Sciatic nerve (tissue), 2 donors: ENCODE measurements at regions of chr12 and their contacts with region 1.

Region 1: DNA sequence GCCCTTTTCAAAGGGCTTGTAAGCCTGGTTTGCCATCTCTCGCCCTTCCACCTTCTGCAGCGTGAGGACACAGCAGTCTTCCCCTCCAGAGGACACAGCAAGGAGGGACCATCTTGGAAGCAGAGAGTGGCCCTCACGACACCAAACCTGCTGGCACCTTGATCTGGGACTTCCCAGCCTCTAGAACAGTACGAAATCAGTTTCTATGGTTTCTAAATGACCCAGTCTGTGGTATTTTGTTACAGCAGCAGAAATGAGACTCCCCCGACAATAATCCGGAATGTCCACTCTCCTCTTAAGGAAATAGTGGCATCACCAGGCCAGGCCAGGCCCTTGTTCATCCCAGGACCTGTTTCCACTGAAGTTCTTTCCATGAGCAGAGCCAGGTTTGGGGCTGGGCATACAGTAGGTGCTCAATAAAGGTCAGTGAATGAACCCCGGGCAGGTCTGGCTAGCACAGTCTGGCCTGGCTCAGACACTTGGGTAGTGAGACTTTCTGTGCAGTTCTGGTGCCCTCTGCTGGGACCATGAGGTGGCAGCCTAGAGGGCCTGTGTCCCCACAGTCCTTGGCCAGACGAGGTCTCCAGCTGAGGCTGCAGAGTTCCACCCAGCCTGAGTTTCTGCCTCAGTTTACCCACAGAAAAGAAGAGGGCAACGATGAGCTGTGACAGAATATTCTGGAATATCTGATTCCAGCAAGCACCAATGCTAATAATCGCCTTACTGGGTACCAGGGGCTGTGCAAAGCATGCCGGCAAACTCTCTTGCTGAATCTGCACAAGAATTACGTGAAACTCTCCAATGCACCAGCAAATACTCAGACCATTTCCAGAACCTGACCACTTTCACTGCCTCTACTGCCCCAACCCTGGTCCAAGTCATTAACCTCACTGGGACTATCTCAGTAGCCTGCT is 14.0 kb downstream of the ABCB9 start:
- DNase-seq: peak; percentile 87
- ATAC-seq: peak; percentile 95

Region 2: GRCh38 chr12:122856999-122857671 is 95.1 kb before region 1 on chr12:
- intact Hi-C with region 1: loop called (anchors 5 kb)
- DNase-seq: no peak
- ATAC-seq: no peak

Region 3: DNA sequence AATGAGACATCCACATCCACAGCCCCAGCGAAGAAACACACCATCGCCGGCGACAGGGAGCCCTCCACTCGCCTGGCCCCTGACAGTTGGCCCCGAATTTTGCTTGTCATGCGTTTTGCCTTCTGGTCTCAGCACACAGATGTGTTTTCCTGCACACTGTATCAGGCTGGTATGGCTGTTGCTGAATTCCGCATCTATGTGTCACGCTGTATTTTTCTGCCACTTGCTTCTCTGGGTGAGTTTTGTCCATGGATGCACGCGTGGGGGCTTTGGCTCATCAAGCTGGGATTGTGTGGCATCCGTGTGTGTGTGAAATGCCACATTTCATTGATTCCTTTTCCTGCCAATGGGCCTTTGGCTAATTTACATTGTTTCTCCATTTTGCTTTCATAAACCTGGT is 54.7 kb after region 1 on chr12:
- intact Hi-C with region 1: no loop called
- DNase-seq: no peak
- ATAC-seq: no peak